ENCODE measurements at regions of chr1 and their contacts with region 1.

Region 1: DNA sequence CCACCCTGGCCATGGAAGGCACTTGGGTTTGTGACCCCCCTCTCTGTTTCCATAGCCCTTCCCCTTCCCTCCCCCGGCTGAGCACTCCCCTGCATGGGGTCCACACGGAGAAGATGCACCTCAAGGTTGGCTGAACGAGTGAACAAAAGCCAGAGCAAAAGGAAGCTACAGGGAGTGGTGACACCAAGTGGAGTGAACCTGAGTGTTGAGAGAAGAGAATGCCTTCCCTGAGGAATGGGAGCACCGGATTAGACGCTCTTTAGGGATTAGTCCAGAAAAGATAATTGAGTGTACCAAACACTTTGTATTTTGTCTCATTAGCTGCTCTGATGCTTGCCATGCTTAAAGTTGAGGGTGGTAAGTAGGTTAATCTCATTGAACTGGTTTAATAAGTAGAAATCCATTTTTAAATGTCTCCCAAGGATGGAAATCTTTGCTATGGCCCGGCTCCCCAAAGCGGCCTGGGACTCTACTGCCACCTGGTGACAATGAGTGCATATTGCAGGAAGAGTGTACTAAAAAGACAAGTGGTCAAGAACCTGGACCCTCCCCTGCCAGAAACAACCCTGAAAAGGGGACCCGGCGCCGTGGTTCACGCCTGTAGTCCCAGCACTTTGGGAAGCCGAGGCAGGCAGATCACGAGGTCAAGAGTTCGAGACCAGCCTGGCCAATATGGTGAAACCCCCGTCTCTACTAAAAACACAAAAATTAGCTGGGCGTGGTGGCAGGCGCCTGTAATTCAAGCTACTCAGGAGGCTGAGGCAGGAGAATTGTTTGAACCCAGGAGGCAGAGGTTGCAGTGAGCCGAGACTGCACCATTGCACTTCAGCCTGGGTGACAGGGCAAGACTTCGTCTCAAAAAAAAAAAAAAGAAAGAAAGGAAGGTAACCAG is 150.6 kb upstream of the ZC3H12A start:
- DNase-seq: peak in 4 of 14 experiments; percentile 1 to 26 (median 14)
- ATAC-seq: no peak
- H3K4me3 ChIP-seq: no peak overlapping the region
- H3K4me3 Mint-ChIP-seq: no peak overlapping the region
- H3K27ac ChIP-seq: no peak overlapping the region
- H3K27ac Mint-ChIP-seq: no peak overlapping the region
- H3K4me1 ChIP-seq: no peaks in the 10 kb centered on the region
- H3K4me1 Mint-ChIP-seq: no peaks in the 10 kb centered on the region
- H3K27me3 ChIP-seq: peaks cover 21 to 29% of the 10 kb centered on the region in 2 experiments
- H3K27me3 Mint-ChIP-seq: peaks cover 57% of the 10 kb centered on the region
- CTCF ChIP-seq: peak; percentile 41

Region 2: GRCh38 chr1:36516372-36517325 is 807.1 kb before region 1 on chr1:
- CTCF ChIA-PET with region 1: no interaction called
- POLR2A ChIA-PET with region 1: no interaction called
- intact Hi-C with region 1: loop called in 1 of 2 experiments (anchors 5 kb)
- DNase-seq: peak in 13 of 14 experiments; percentile 5 to 74 (median 26)
- ATAC-seq: no peak
- H3K4me3 ChIP-seq: no peak overlapping the region
- H3K4me3 Mint-ChIP-seq: no peak overlapping the region
- H3K27ac ChIP-seq: no peak overlapping the region
- H3K27ac Mint-ChIP-seq: no peak overlapping the region
- H3K4me1 ChIP-seq: no peaks in the 10 kb centered on the region
- H3K4me1 Mint-ChIP-seq: no peaks in the 10 kb centered on the region
- H3K27me3 ChIP-seq: no peaks in the 10 kb centered on the region
- H3K27me3 Mint-ChIP-seq: no peaks in the 10 kb centered on the region
- CTCF ChIP-seq: peak; percentile 75

Region 3: DNA sequence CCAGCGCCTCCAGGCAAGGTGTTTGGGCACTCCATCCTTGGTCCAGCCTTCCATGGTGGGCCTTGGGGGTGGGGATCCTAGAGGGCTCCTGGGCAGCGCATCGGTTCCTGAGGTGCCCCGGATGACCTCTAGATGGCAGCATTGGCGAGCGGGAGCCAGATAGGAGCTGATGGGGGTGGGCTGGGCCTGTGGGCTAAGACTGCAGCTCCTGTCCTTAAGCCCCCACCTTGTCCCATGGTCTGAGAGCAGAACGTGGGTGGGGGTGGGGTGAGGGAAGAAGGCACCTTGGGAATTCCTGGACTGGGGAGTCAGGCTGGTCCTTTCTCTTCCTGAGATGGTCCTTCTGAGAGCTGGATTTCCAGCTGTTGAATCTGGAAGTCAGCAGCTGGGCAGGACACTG is 747.6 kb before region 1 on chr1:
- CTCF ChIA-PET with region 1: interaction called, 3 read pairs
- POLR2A ChIA-PET with region 1: no interaction called
- intact Hi-C with region 1: loop called in 1 of 2 experiments (anchors 5 kb)
- DNase-seq: peak; percentile 16 to 70 (median 38)
- ATAC-seq: no peak
- H3K4me3 ChIP-seq: no peak overlapping the region
- H3K4me3 Mint-ChIP-seq: no peak overlapping the region
- H3K27ac ChIP-seq: no peak overlapping the region
- H3K27ac Mint-ChIP-seq: no peak overlapping the region
- H3K4me1 ChIP-seq: no peaks in the 10 kb centered on the region
- H3K4me1 Mint-ChIP-seq: no peaks in the 10 kb centered on the region
- H3K27me3 ChIP-seq: peaks cover 4 to 19% of the 10 kb centered on the region in 2 experiments
- H3K27me3 Mint-ChIP-seq: peaks cover 53% of the 10 kb centered on the region
- CTCF ChIP-seq: peak; percentile 72

Region 4: GRCh38 chr1:37267111-37267813 is 56.5 kb before region 1 on chr1:
- CTCF ChIA-PET with region 1: no interaction called
- POLR2A ChIA-PET with region 1: no interaction called
- intact Hi-C with region 1: no loop called
- DNase-seq: no peak
- ATAC-seq: no peak
- H3K4me3 ChIP-seq: no peak overlapping the region
- H3K4me3 Mint-ChIP-seq: no peak overlapping the region
- H3K27ac ChIP-seq: no peak overlapping the region
- H3K27ac Mint-ChIP-seq: no peak overlapping the region
- H3K4me1 ChIP-seq: no peaks in the 10 kb centered on the region
- H3K4me1 Mint-ChIP-seq: no peaks in the 10 kb centered on the region
- H3K27me3 ChIP-seq: peaks cover 0 to 11% of the 10 kb centered on the region in 2 experiments
- H3K27me3 Mint-ChIP-seq: peaks cover 42% of the 10 kb centered on the region
- CTCF ChIP-seq: no peak

Measured in CD4-positive, alpha-beta T cell (primary cell).